CD8-positive, alpha-beta memory T cell (primary cell): ENCODE measurements at regions of chr14 and their contacts with region 1.

Region 1: DNA sequence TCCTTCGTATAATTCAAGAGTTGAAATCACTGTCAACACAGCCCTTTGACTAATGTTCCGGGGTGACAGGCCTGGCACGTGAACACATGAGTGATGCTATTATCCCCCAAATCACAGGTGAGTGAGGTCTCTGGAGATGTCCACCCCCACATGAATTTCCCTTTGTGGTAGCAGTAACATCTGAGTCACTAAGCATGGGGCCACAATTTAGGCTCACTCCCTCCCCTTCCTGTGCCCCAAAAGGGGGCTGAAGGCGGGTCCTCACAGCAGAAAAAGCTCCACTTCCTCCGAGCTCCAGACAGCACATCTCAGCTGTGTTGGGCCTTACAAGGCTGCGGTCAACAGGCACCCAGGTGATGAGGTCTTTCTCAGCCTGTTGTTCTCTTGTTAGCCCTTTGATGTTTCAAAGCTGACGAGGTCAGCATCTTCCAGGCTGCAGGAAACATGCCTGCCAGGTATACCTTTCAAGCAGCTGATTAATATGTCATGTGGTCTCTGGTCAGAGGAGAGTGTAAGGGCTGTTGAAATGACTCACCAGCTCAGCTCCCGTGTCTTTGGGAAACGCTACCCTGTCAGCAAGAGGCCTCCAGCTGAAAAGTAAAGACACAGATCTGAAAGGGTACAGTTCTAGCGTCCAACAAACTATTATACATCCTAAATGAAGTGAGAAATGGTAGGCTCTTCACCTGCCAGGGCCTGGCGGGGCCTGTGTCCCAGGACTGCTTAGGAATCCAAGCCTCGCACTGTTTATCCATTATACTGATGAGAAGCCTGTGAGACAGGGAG is 107.3 kb downstream of the ZFP36L1 start:
- DNase-seq: peak; percentile 66 to 94 (median 82)
- H3K4me3 ChIP-seq: no peak overlapping the region
- H3K4me3 Mint-ChIP-seq: peak overlapping the region; percentile 22 to 74 (median 50)
- H3K27ac ChIP-seq: peak overlapping the region; percentile 49
- H3K27ac Mint-ChIP-seq: peak overlapping the region; percentile 88 to 99 (median 98)
- H3K4me1 ChIP-seq: peaks cover 54% of the 10 kb centered on the region
- H3K4me1 Mint-ChIP-seq: peaks cover 58 to 68% (median 60%) of the 10 kb centered on the region in 3 donors
- H3K27me3 ChIP-seq: no peaks in the 10 kb centered on the region
- H3K27me3 Mint-ChIP-seq: no peaks in the 10 kb centered on the region

Region 2: GRCh38 chr14:68392393-68393141 is 293.0 kb before region 1 on chr14:
- CTCF ChIA-PET with region 1: no interaction called
- POLR2A ChIA-PET with region 1: no interaction called
- DNase-seq: no peak
- H3K4me3 ChIP-seq: no peak overlapping the region
- H3K4me3 Mint-ChIP-seq: no peak overlapping the region
- H3K27ac ChIP-seq: no peak overlapping the region
- H3K27ac Mint-ChIP-seq: peak overlapping the region in 3 of 8 donors; percentile 21 to 78 (median 58)
- H3K4me1 ChIP-seq: no peaks in the 10 kb centered on the region
- H3K4me1 Mint-ChIP-seq: no peaks in the 10 kb centered on the region
- H3K27me3 ChIP-seq: no peaks in the 10 kb centered on the region
- H3K27me3 Mint-ChIP-seq: no peaks in the 10 kb centered on the region

Region 3: DNA sequence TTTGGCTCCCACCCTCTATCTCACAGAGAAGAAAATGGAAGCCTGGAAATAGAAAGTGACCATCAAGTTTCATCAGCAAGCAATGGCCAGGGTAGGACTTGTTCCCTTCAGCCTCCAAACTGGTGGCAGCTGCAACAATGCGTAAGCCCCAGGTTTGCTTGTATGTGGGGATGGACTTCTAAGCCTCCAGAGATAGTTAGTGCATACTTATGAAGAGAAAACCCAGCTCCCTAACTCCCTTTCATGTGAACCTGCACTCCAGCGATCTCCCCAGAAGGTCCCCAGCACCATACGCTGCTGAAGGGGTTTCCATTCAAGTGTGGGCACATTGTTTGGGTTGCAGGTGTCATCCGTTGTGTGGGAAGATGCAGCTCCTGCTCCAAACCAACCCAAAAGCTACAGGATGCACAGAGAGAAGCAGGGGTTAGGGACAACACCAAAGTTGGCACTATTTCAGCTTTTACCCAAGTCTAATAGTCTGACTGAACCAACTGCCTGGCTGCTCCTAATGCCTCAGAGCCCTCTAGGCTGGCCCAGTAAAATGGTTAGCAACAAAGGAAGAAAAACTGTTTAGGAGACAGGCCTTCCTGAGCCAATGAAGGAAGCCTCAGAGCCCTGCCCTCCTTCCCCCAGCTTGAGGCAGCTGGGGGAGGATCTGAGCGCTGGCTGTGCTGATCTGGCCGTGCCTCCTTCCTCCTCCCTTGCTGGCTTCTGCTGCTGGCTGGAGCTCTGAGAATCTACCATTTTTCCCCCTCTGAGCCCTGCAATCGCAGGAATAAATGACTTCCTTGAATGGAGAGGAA is 94.9 kb after region 1 on chr14:
- CTCF ChIA-PET with region 1: interaction called, 13 read pairs
- POLR2A ChIA-PET with region 1: interaction called, 22 read pairs
- DNase-seq: peak in 3 of 5 donors; percentile 14 to 49 (median 21)
- H3K4me3 ChIP-seq: peak overlapping the region; percentile 57
- H3K4me3 Mint-ChIP-seq: peak overlapping the region; percentile 71 to 90 (median 85)
- H3K27ac ChIP-seq: peak overlapping the region; percentile 55
- H3K27ac Mint-ChIP-seq: peak overlapping the region; percentile 95 to 99 (median 98)
- H3K4me1 ChIP-seq: peaks cover 79% of the 10 kb centered on the region
- H3K4me1 Mint-ChIP-seq: peaks cover 78 to 95% (median 84%) of the 10 kb centered on the region in 3 donors
- H3K27me3 ChIP-seq: no peaks in the 10 kb centered on the region
- H3K27me3 Mint-ChIP-seq: no peaks in the 10 kb centered on the region